ENCODE measurements at regions of chr1 and their contacts with region 1.

Region 1: DNA sequence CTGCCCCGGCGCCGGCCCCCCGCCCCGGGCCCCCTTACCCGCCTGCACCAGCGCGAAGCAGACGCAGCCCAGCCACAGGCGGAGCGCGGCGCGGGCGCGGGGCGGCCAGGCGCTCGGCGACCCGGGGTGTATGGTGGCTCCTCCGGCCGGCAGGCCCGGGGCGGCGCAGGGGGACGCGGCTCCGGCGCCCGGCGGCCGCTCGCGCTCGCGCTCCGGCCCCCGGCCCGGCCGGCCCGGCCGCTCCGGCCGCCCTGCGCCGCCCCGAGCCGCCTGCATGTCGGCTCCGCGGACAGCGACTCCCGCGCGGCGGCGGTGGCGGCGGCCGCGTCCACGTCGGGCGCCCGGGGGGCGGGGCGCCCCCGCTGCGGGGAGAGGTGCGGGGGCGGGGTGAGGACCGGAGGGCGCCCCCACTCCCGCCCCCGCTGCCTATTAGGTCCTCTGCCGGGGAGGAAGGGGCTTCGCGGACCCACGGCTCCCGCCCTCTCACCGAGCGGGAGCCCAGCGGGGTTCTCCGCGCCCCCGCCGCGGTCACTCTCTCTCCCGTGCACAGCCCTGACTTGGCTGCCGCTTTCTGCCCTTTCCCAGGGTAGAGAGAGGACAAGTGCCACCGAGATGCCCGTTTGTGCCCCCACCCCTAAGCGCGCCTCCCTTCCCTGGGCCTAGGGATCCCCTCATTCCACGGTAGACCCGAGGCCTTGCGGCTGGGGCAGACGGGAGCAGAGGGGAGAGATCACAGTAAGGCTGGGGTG is at the start of gene FNDC5:
- DNase-seq: peak in 1 of 5 donors; percentile 42
- ATAC-seq: peak in 3 of 4 donors; percentile 36 to 57 (median 53)
- H3K4me3 ChIP-seq: peak within 1 kb of the TSS; percentile 23 to 70 (median 56)
- H3K27ac ChIP-seq: peak within 1 kb of the TSS in 10 of 12 donors; percentile 8 to 70 (median 58)
- H3K4me1 ChIP-seq: peaks cover 0 to 37% (median 14%) of the 10 kb centered on the region in 12 donors
- H3K27me3 ChIP-seq: peaks cover 0 to 25% (median 0%) of the 10 kb centered on the region in 9 donors
- CTCF ChIP-seq: no peak
- POLR2A ChIP-seq: no peak
- total RNA-seq, gene FNDC5: 43.7 to 134 (median 59.7) TPM

Region 2: DNA sequence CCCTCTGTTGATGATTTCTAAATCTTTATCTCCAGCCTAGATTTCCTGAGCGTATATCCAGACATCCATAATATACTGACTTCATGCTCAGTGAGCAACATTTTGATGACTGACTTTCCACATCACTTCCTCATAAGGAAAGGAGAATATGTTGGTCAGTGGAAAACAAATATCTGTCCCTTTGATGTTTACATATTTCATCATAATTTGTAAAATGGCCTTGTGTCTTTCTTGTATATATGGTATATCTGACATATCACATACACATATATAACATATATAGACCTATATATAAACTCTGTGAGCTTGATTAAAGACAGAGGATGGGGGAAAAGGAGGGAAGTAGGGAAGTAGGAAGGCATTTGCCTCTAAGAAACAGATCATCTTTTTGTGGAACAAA is 313.0 kb before region 1 on chr1:
- intact Hi-C with region 1: no loop called
- DNase-seq: no peak
- ATAC-seq: no peak
- H3K4me3 ChIP-seq: no peak overlapping the region
- H3K27ac ChIP-seq: no peak overlapping the region
- H3K4me1 ChIP-seq: no peaks in the 10 kb centered on the region
- H3K27me3 ChIP-seq: no peaks in the 10 kb centered on the region
- CTCF ChIP-seq: no peak
- POLR2A ChIP-seq: no peak

Region 3: GRCh38 chr1:32702599-32703478 is 167.9 kb before region 1 on chr1 and contains the start of gene SYNC:
- intact Hi-C with region 1: loop called in 1 of 10 experiments (anchors 10 kb)
- DNase-seq: peak; percentile 64 to 83 (median 71)
- ATAC-seq: peak; percentile 63 to 80 (median 73)
- H3K4me3 ChIP-seq: peak within 1 kb of the TSS; percentile 52 to 90 (median 70)
- H3K27ac ChIP-seq: peak within 1 kb of the TSS; percentile 72 to 94 (median 88)
- H3K4me1 ChIP-seq: peaks cover 0 to 35% (median 22%) of the 10 kb centered on the region in 12 donors
- H3K27me3 ChIP-seq: peaks cover 0 to 8% (median 0%) of the 10 kb centered on the region in 9 donors
- CTCF ChIP-seq: no peak
- POLR2A ChIP-seq: peak in 1 of 2 donors; percentile 46
- total RNA-seq, gene SYNC: 10.2 to 22.3 (median 14.3) TPM

Region 4: DNA sequence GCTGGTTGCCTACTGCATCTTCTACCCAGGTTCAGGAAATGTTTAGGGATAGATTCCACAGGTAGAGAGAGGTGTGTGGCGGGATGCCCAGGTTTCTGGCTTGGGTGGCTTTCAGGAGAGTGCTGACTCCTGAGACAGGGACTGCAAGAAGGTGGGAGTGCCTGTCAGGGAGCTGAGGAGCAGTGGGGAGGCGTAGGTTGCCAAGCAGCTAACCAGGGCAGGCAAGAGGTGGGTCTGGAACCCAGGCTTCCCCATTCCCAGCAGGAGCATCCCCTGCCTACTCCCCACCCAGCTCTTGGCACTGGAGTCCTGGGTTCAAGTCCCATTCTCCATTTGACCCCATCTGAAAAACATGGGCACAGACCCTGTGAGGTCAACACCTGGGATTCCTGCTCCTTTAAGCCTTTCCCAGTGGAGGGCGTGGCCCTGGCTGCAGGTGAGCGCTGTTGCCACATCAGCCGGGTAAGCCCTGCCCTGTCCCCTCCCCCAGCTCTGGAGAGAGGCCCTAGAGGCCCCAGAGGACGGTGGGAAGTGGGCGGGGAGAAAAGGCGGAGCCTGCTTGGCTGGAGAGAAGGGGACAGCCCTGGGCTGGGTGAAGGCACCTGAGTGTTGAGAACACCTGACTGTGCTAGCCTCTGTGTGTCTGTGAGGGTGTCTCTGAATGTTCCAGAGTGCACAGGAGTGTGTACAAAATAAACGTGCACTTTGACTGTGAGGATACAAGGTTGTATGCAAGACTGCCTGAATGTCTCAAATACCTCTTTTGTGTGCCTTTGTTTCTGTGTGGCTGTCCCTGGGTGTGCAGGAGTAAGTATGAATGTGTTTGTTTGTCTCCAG is 154.3 kb before region 1 on chr1:
- intact Hi-C with region 1: loop called in 8 of 10 experiments (anchors 5 to 10 kb)
- DNase-seq: peak in 4 of 5 donors; percentile 48 to 70 (median 61)
- ATAC-seq: peak; percentile 61 to 72 (median 68)
- H3K4me3 ChIP-seq: no peak overlapping the region
- H3K27ac ChIP-seq: no peak overlapping the region
- H3K4me1 ChIP-seq: peaks cover 0 to 10% (median 3%) of the 10 kb centered on the region in 12 donors
- H3K27me3 ChIP-seq: peaks cover 0 to 3% (median 0%) of the 10 kb centered on the region in 9 donors
- CTCF ChIP-seq: no peak
- POLR2A ChIP-seq: peak in 1 of 2 donors; percentile 16

Region 5: GRCh38 chr1:32798679-32799416 is 71.9 kb before region 1 on chr1:
- intact Hi-C with region 1: loop called in 1 of 10 experiments (anchors 2 kb)
- DNase-seq: no peak
- ATAC-seq: peak in 1 of 4 donors; percentile 9
- H3K4me3 ChIP-seq: no peak overlapping the region
- H3K27ac ChIP-seq: peak overlapping the region in 1 of 12 donors; percentile 68
- H3K4me1 ChIP-seq: peaks cover 0 to 17% (median 0%) of the 10 kb centered on the region in 12 donors
- H3K27me3 ChIP-seq: no peaks in the 10 kb centered on the region
- CTCF ChIP-seq: no peak
- POLR2A ChIP-seq: no peak

Region 6: GRCh38 chr1:32817159-32817814 is 53.5 kb before region 1 on chr1 and contains the starts of genes S100PBP and YARS1:
- intact Hi-C with region 1: loop called in 6 of 10 experiments (anchors 5 kb)
- DNase-seq: peak; percentile 99 to 100 (median 100)
- ATAC-seq: peak; percentile 97 to 99 (median 98)
- H3K4me3 ChIP-seq: peak within 1 kb of the TSS; percentile 76 to 99 (median 88)
- H3K27ac ChIP-seq: peak within 1 kb of the TSS; percentile 94 to 99 (median 98)
- H3K4me1 ChIP-seq: peaks cover 5 to 59% (median 31%) of the 10 kb centered on the region in 12 donors
- H3K27me3 ChIP-seq: no peaks in the 10 kb centered on the region
- CTCF ChIP-seq: peak in 3 of 12 donors; percentile 5 to 10 (median 10)
- POLR2A ChIP-seq: peak in 1 of 2 donors; percentile 64
- total RNA-seq, gene S100PBP: 9.1 to 21.2 (median 10.7) TPM
- total RNA-seq, gene YARS1: 20.2 to 58.1 (median 34.8) TPM

Region 7: GRCh38 chr1:32828341-32828740 is 42.4 kb before region 1 on chr1:
- intact Hi-C with region 1: loop called in 2 of 10 experiments (anchors 5 kb)
- DNase-seq: no peak
- ATAC-seq: no peak
- H3K4me3 ChIP-seq: no peak overlapping the region
- H3K27ac ChIP-seq: no peak overlapping the region
- H3K4me1 ChIP-seq: no peaks in the 10 kb centered on the region
- H3K27me3 ChIP-seq: no peaks in the 10 kb centered on the region
- CTCF ChIP-seq: peak in 6 of 12 donors; percentile 6 to 43 (median 32)
- POLR2A ChIP-seq: no peak

Measured in heart left ventricle (tissue), 16 donors.